Stomach (tissue), 19 donors: ENCODE measurements at regions of chr3 and their contacts with region 1.

Region 1: GRCh38 chr3:45938864-45939263 is 4.4 kb upstream of the CXCR6 start:
- DNase-seq: peak; percentile 91 to 96
- H3K4me3 ChIP-seq: no peak overlapping the region
- H3K27ac ChIP-seq: peak overlapping the region in 1 of 5 donors; percentile 14
- H3K4me1 ChIP-seq: peaks cover 20 to 33% (median 24%) of the 10 kb centered on the region in 4 donors
- H3K27me3 ChIP-seq: no peaks in the 10 kb centered on the region
- CTCF ChIP-seq: peak in 5 of 7 experiments; percentile 85 to 94 (median 88)
- EP300 ChIP-seq: no peak
- POLR2A ChIP-seq: no peak

Region 2: GRCh38 chr3:46078712-46079400 is 140.0 kb after region 1 on chr3:
- intact Hi-C with region 1: loop called (anchors 2 kb)
- DNase-seq: peak; percentile 96
- H3K4me3 ChIP-seq: peak overlapping the region in 2 of 4 donors; percentile 11 to 14
- H3K27ac ChIP-seq: no peak overlapping the region
- H3K4me1 ChIP-seq: peaks cover 0 to 7% (median 3%) of the 10 kb centered on the region in 4 donors
- H3K27me3 ChIP-seq: no peaks in the 10 kb centered on the region
- CTCF ChIP-seq: peak in 6 of 7 experiments; percentile 57 to 99 (median 94)
- EP300 ChIP-seq: no peak
- POLR2A ChIP-seq: no peak

Region 3: GRCh38 chr3:46378426-46378942 is 439.6 kb after region 1 on chr3:
- intact Hi-C with region 1: loop called (anchors 10 kb)
- DNase-seq: peak; percentile 68 to 83
- H3K4me3 ChIP-seq: no peak overlapping the region
- H3K27ac ChIP-seq: no peak overlapping the region
- H3K4me1 ChIP-seq: peaks cover 0 to 27% (median 17%) of the 10 kb centered on the region in 4 donors
- H3K27me3 ChIP-seq: peaks cover 0 to 15% (median 0%) of the 10 kb centered on the region in 3 donors
- CTCF ChIP-seq: peak in 5 of 7 experiments; percentile 13 to 62 (median 35)
- EP300 ChIP-seq: no peak
- POLR2A ChIP-seq: no peak